Spleen (tissue), 13 donors: ENCODE measurements at regions of chr19 and their contacts with region 1.

Region 1: GRCh38 chr19:46661020-46661731 is at the start of gene DACT3:
- DNase-seq: peak; percentile 100
- H3K4me3 ChIP-seq: peak within 1 kb of the TSS; percentile 51 to 76 (median 56)
- H3K27ac ChIP-seq: peak within 1 kb of the TSS; percentile 15 to 83 (median 74)
- H3K4me1 ChIP-seq: peaks cover 20 to 46% (median 34%) of the 10 kb centered on the region in 6 donors
- H3K27me3 ChIP-seq: peaks cover 4 to 47% (median 27%) of the 10 kb centered on the region in 7 donors
- CTCF ChIP-seq: peak in 4 of 11 experiments; percentile 22 to 44 (median 30)
- POLR2A ChIP-seq: no peak
- total RNA-seq, gene DACT3: 4.9 to 10.4 (median 6.1) TPM

Region 2: GRCh38 chr19:46529622-46530462 is 131.3 kb before region 1 on chr19:
- intact Hi-C with region 1: loop called (anchors 10 kb)
- DNase-seq: peak; percentile 89
- H3K4me3 ChIP-seq: no peak overlapping the region
- H3K27ac ChIP-seq: peak overlapping the region in 3 of 8 donors; percentile 28 to 51 (median 51)
- H3K4me1 ChIP-seq: peaks cover 0 to 20% (median 14%) of the 10 kb centered on the region in 6 donors
- H3K27me3 ChIP-seq: peaks cover 0 to 23% (median 0%) of the 10 kb centered on the region in 7 donors
- CTCF ChIP-seq: peak; percentile 82 to 96 (median 91)
- POLR2A ChIP-seq: no peak

Region 3: DNA sequence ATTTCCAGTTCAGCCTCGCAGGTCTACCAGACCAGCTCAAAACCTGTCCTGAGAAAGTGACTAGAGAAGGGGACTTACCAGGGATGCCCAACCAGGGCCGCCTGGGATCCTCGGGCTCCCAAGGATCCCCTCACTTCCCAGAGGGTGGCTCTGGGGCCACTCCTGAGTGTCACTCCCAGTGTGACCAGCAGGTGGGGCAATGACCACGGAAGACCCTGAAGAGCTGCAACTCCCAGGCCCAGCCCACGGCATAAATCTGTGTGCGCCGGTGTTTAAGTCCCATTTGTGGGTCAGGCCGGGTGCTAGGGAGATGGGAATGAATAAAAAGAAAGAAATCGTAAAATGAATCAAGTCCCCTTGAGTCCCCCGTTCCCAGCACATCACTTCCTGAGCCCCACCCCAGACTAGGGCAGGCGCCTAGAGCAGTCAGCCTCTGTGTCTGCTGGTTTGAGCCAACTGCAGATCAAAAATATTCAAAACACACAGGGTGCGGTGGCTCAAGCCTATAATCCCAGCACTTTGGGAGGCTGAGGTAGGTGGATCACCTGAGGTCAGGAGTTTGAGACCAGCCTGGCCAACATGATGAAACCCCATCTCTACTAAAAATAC is 47.0 kb before region 1 on chr19:
- intact Hi-C with region 1: loop called (anchors 5 kb)
- DNase-seq: peak; percentile 93
- H3K4me3 ChIP-seq: no peak overlapping the region
- H3K27ac ChIP-seq: no peak overlapping the region
- H3K4me1 ChIP-seq: peaks cover 36 to 95% (median 59%) of the 10 kb centered on the region in 6 donors
- H3K27me3 ChIP-seq: no peaks in the 10 kb centered on the region
- CTCF ChIP-seq: peak; percentile 83 to 96 (median 92)
- POLR2A ChIP-seq: no peak